Endothelial cell of umbilical vein (primary cell): ENCODE measurements at regions of chr6 and their contacts with region 1.

Region 1: GRCh38 chr6:87701676-87702588 is at the start of gene AKIRIN2:
- DNase-seq: peak; percentile 100
- H3K4me3 ChIP-seq: peak within 1 kb of the TSS; percentile 95 to 100 (median 97)
- H3K27ac ChIP-seq: peak within 1 kb of the TSS; percentile 62
- H3K4me1 ChIP-seq: peaks cover 30% of the 10 kb centered on the region
- H3K27me3 ChIP-seq: no peaks in the 10 kb centered on the region
- CTCF ChIP-seq: no peak
- POLR2A ChIP-seq: peak; percentile 92
- total RNA-seq, gene AKIRIN2: 46.1 and 46.4 TPM in 2 replicates

Region 2: DNA sequence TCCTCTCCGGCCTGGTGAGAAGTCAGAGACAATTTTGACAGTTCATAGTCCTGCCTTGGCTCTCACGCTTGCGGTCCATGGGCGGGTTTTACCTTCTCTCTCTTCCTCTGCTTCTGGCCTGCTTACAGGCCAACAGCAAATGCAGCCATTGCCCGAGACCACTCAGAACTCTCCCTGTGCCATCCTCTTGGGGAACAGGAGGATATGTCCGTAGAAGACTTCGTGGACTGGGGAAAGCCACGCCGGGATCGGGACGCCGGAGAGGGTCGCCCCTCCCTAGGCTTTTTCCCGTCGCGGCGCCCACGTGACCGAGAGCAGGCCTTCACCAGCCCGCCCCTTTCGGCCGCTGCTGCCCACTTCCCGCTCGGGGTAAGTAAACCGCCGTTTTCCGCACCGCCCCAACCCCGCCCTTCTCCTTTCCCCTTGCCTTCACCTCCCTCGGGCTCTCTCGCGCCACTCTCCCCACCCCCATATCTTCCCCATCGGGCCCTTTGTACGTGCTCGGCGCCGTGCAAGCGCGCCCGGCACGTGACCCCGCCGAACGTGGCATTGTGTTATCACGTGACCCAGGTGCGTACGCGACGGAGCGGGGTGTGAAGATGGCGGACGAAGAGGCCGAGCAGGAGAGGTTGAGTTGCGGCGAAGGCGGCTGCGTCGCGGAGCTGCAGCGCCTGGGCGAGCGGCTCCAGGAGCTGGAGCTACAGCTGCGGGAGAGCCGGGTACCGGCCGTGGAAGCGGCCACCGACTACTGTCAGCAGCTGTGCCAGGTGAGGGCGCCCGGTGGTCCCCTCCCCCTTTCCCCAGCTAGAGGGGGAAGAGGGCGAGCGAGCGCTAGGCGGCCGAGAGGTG is 546.7 kb before region 1 on chr6 and contains the start of gene ZNF292:
- CTCF ChIA-PET with region 1: no interaction called
- POLR2A ChIA-PET with region 1: no interaction called
- dilution Hi-C with region 1: no loop called
- intact Hi-C with region 1: loop called (anchors 2 kb)
- DNase-seq: peak; percentile 98
- H3K4me3 ChIP-seq: peak within 1 kb of the TSS; percentile 60 to 91 (median 89)
- H3K27ac ChIP-seq: peak within 1 kb of the TSS; percentile 96
- H3K4me1 ChIP-seq: peaks cover 35% of the 10 kb centered on the region
- H3K27me3 ChIP-seq: no peaks in the 10 kb centered on the region
- CTCF ChIP-seq: no peak
- POLR2A ChIP-seq: no peak
- total RNA-seq, gene ZNF292: 23.8 and 24.9 TPM in 2 replicates

Region 3: GRCh38 chr6:87472525-87473418 is 229.2 kb before region 1 on chr6 and contains the start of gene SLC35A1:
- CTCF ChIA-PET with region 1: no interaction called
- POLR2A ChIA-PET with region 1: no interaction called
- dilution Hi-C with region 1: no loop called
- intact Hi-C with region 1: loop called (anchors 1 kb)
- DNase-seq: peak; percentile 88
- H3K4me3 ChIP-seq: peak within 1 kb of the TSS; percentile 53 to 91 (median 90)
- H3K27ac ChIP-seq: peak within 1 kb of the TSS; percentile 91
- H3K4me1 ChIP-seq: peaks cover 8% of the 10 kb centered on the region
- H3K27me3 ChIP-seq: peaks cover 2% of the 10 kb centered on the region in 2 experiments
- CTCF ChIP-seq: no peak
- POLR2A ChIP-seq: peak; percentile 86
- total RNA-seq, gene SLC35A1: 12.9 and 13.0 TPM in 2 replicates

Region 4: GRCh38 chr6:87589693-87590549 is 112.0 kb before region 1 on chr6 and contains the starts of genes ORC3 and RARS2:
- CTCF ChIA-PET with region 1: interaction called, 3 read pairs
- POLR2A ChIA-PET with region 1: interaction called, 4 read pairs
- dilution Hi-C with region 1: no loop called
- intact Hi-C with region 1: loop called (anchors 1 kb)
- DNase-seq: peak; percentile 95
- H3K4me3 ChIP-seq: peak within 1 kb of the TSS; percentile 82 to 96 (median 94)
- H3K27ac ChIP-seq: peak within 1 kb of the TSS; percentile 53
- H3K4me1 ChIP-seq: peaks cover 16% of the 10 kb centered on the region
- H3K27me3 ChIP-seq: no peaks in the 10 kb centered on the region
- CTCF ChIP-seq: no peak
- POLR2A ChIP-seq: peak; percentile 78
- total RNA-seq, gene ORC3: 17.9 and 20.1 TPM in 2 replicates
- total RNA-seq, gene RARS2: 33.7 and 34.0 TPM in 2 replicates

Region 5: GRCh38 chr6:87671555-87672029 is 30.3 kb before region 1 on chr6:
- CTCF ChIA-PET with region 1: no interaction called
- POLR2A ChIA-PET with region 1: no interaction called
- dilution Hi-C with region 1: no loop called
- intact Hi-C with region 1: no loop called
- DNase-seq: no peak
- H3K4me3 ChIP-seq: no peak overlapping the region
- H3K27ac ChIP-seq: no peak overlapping the region
- H3K4me1 ChIP-seq: no peaks in the 10 kb centered on the region
- H3K27me3 ChIP-seq: no peaks in the 10 kb centered on the region
- CTCF ChIP-seq: no peak
- POLR2A ChIP-seq: no peak

Region 6: GRCh38 chr6:87731818-87732661 is 30.1 kb after region 1 on chr6:
- CTCF ChIA-PET with region 1: no interaction called
- POLR2A ChIA-PET with region 1: no interaction called
- dilution Hi-C with region 1: no loop called
- intact Hi-C with region 1: loop called (anchors 1 kb)
- DNase-seq: peak; percentile 88
- H3K4me3 ChIP-seq: no peak overlapping the region
- H3K27ac ChIP-seq: peak overlapping the region; percentile 23
- H3K4me1 ChIP-seq: peaks cover 11% of the 10 kb centered on the region
- H3K27me3 ChIP-seq: peaks cover 0 to 3% of the 10 kb centered on the region in 2 experiments
- CTCF ChIP-seq: no peak
- POLR2A ChIP-seq: no peak